ENCODE measurements at regions of chr1 and their contacts with region 1.

Region 1: DNA sequence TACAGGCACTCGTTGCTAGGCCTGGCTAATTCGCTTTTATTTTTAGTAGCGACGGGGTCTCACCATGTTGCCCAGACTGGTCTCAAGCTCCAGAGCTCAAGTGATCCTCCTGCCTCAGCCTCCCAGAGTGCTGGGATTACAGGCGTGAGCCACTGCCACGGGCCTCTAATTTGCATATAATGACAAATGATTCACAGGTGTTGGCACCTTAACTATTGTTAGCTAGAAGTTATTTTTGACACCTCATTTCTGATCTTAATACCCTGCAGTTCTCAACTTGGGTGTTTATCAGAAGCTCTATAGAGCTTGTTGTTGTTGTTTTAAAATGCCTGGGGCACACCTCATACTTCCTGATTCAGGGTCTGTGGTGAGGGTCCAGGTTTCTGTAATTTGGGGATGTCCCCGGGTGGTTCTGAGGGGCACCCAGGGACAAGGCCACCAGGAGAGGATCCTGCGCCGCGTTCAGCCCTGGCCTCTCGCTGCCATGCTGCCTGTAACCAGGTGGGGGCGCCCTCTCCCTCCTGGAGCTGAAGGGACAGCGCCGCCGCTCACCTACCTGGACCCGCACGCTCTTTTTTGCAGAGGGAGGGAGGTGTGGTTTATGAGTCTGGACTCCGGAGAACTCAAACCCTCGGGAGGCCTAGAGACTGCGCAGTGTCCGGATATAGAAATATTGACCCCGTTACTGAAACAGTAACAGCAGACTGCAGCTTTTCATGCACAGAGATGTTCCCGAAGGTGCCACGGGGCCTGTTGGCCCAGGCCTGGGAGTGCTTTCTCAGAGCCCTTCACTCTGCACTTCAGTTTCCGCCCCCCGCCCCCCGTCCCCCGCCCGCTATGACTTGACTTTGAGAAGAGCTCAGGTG is 23.0 kb upstream of the NEK2 start:
- DNase-seq: peak; percentile 60 to 87 (median 72)
- ATAC-seq: peak; percentile 96
- H3K4me3 ChIP-seq: no peak overlapping the region
- H3K4me3 Mint-ChIP-seq: peak overlapping the region; percentile 23 to 83 (median 65)
- H3K27ac ChIP-seq: no peak overlapping the region
- H3K27ac Mint-ChIP-seq: peak overlapping the region in 2 of 9 donors; percentile 5 to 62
- H3K4me1 ChIP-seq: peaks cover 4 to 16% of the 10 kb centered on the region in 2 donors
- H3K4me1 Mint-ChIP-seq: peaks cover 0 to 42% (median 9%) of the 10 kb centered on the region in 7 donors
- H3K27me3 ChIP-seq: no peaks in the 10 kb centered on the region
- H3K27me3 Mint-ChIP-seq: peaks cover 0 to 37% (median 0%) of the 10 kb centered on the region in 5 donors

Region 2: DNA sequence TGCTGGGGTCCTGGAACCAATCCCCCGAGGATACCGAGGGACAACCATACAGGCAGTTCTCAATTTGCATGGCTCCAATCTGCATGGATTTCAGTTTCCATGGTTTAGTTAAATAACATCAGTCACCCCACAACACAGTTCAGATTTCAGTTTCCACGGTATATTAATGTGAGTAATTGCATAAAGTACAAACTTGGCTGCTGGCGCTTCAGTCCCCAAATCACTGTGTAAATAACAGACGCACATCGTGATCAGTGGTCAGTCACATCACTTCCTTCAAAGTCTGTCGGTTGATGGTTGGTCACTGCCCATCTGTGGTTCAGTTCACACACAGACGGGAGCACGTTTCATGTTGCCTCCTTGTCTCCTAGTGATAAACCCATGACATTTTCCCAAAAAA is 198.6 kb after region 1 on chr1:
- CTCF ChIA-PET with region 1: no interaction called
- POLR2A ChIA-PET with region 1: no interaction called
- intact Hi-C with region 1: loop called in 1 of 2 experiments (anchors 5 kb)
- DNase-seq: no peak
- ATAC-seq: no peak
- H3K4me3 ChIP-seq: no peak overlapping the region
- H3K4me3 Mint-ChIP-seq: no peak overlapping the region
- H3K27ac ChIP-seq: no peak overlapping the region
- H3K27ac Mint-ChIP-seq: no peak overlapping the region
- H3K4me1 ChIP-seq: no peaks in the 10 kb centered on the region
- H3K4me1 Mint-ChIP-seq: peaks cover 0 to 5% (median 0%) of the 10 kb centered on the region in 7 donors
- H3K27me3 ChIP-seq: no peaks in the 10 kb centered on the region
- H3K27me3 Mint-ChIP-seq: peaks cover 0 to 31% (median 0%) of the 10 kb centered on the region in 5 donors